ENCODE measurements at regions of chr2 and their contacts with region 1.

Region 1: DNA sequence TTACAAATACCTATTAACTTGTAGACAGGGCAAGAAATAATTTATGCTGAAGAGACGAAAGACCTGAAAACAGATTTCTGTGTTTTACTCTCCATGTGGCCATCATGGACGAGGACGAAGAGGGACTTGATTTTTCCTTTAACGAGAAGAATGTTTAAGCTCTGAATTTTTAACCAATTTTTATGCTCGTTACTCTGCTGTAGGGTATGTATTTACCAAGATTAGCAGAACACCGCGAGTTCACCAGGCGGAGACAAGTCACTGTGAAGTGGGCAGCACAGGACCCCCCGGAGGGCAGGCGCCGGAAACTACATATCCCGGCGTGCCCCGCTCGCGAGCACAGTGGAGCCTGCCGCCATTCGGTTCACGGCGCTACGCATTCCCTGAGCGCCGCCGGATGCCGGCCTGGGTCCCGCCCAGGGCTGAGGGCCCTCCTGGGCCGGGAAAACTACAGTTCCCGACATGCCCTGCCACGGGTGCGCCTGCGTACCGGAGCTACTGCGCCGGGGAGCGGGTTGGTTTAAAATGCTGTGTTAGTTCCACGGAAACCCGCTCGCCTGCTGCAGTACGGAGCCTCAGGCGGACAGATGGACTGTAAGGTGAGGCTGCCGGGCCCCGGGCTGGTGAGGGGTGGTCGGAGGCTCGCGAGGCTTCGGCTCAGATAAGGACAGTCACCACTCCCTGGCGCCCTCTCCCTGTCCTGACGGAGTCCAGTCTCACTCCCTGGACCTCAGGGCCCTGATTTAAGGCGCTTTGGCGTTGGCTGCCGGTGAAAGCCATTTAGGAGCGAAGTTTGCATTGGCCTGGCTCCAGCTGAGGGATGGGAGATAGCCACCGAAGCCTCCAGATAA is at the start of gene CCDC150:
- DNase-seq: peak; percentile 97
- H3K4me3 Mint-ChIP-seq: peak within 1 kb of the TSS; percentile 92
- H3K27ac Mint-ChIP-seq: peak within 1 kb of the TSS; percentile 48
- H3K4me1 Mint-ChIP-seq: peaks cover 11% of the 10 kb centered on the region
- H3K27me3 Mint-ChIP-seq: peaks cover 1% of the 10 kb centered on the region
- total RNA-seq, gene CCDC150: 10.1 to 10.8 TPM

Region 2: DNA sequence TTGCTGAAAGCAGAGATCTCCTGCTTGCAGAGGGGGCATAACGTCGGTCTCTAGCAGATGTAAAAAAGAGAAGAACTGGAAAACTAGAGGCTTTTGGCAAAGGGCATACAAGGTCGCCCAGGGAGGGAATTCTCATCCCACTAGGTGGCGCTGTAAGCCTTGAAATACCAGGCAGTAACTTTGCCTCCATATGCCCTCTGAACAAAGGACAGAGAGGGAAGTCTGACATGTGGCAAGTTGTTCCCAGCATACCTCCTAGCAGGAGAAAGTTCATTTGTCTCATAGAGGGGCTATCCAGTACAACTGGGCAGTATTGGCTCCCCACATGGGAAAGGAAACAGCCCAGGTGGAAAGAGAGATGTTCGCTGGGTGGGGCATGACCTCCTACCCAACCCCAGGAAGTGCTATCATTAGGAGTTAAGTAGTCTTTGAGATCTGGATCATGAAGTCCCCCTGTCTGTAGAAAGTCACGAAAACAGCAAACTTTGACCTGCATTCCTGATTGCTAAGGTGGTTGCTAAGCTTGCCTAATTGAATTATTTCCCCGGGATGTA is 507.9 kb before region 1 on chr2:
- CTCF ChIA-PET with region 1: no interaction called
- intact Hi-C with region 1: loop called (anchors 2 kb)
- DNase-seq: peak; percentile 70
- H3K4me3 Mint-ChIP-seq: no peak overlapping the region
- H3K27ac Mint-ChIP-seq: peak overlapping the region; percentile 70
- H3K4me1 Mint-ChIP-seq: peaks cover 12% of the 10 kb centered on the region
- H3K27me3 Mint-ChIP-seq: no peaks in the 10 kb centered on the region

Region 3: DNA sequence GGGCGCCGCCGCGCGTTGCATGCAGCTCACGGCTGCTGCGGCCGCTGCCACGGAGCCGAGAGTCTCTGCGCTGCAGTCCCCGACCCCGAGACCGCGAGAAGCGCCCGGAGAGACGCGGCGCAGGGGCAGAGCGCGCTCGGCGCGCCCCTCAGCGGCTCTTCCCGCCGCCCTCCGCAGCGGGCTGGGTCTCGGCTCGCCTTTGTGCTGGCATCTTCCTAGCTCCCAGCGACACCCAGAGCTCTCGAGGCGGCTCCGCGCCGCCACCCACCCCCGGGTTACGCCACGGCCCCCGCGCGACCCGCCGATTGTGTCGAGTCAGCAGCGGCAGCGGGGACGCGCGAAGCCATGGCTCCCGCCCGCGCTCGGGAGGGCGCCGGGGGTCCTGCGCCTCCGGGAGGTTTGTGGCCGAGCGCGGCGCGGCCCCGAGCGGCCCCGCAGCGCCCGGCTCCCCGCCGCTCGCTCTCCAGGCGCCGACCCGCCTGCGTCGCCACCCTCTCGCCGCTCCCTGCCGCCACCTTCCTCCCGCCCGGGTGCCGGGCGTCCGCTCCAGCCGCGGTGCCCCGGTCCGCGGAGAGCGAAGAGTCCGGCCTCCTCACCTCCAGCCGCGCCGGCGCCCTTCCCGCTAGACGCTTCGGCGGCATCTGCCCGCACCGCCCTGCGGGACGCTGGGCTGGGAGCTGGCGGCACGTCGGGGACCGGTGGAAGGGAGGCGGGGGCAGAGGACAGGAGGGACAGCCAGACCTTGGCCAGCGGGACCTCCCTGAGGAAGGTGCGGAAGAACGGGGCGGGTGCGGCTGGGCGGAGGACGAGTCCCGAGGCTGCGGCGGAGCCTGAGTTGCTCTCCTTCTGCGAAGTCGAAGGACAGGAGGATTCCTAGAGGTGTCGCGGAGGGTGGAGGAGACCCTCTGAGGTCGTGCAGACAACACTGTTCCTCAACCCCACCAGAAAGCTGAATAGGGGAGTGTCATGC is 46.2 kb before region 1 on chr2:
- CTCF ChIA-PET with region 1: no interaction called
- intact Hi-C with region 1: loop called (anchors 2 kb)
- DNase-seq: peak; percentile 25
- H3K4me3 Mint-ChIP-seq: peak within 1 kb of the TSS; percentile 67
- H3K27ac Mint-ChIP-seq: no peak within 1 kb of the TSS
- H3K4me1 Mint-ChIP-seq: peaks cover 7% of the 10 kb centered on the region
- H3K27me3 Mint-ChIP-seq: peaks cover 56% of the 10 kb centered on the region

Region 4: GRCh38 chr2:196971574-196972279 is 332.3 kb after region 1 on chr2:
- CTCF ChIA-PET with region 1: no interaction called
- intact Hi-C with region 1: no loop called
- DNase-seq: peak; percentile 18
- H3K4me3 Mint-ChIP-seq: no peak overlapping the region
- H3K27ac Mint-ChIP-seq: no peak overlapping the region
- H3K4me1 Mint-ChIP-seq: no peaks in the 10 kb centered on the region
- H3K27me3 Mint-ChIP-seq: no peaks in the 10 kb centered on the region

Region 5: GRCh38 chr2:196987649-196988364 is 348.4 kb after region 1 on chr2:
- CTCF ChIA-PET with region 1: no interaction called
- intact Hi-C with region 1: loop called (anchors 1 kb)
- DNase-seq: peak; percentile 76
- H3K4me3 Mint-ChIP-seq: peak overlapping the region; percentile 17
- H3K27ac Mint-ChIP-seq: peak overlapping the region; percentile 98
- H3K4me1 Mint-ChIP-seq: peaks cover 78% of the 10 kb centered on the region
- H3K27me3 Mint-ChIP-seq: no peaks in the 10 kb centered on the region

Region 6: GRCh38 chr2:197434541-197435513 is 795.4 kb after region 1 on chr2 and contains the start of gene SF3B1:
- CTCF ChIA-PET with region 1: no interaction called
- intact Hi-C with region 1: loop called (anchors 2 kb)
- DNase-seq: peak; percentile 100
- H3K4me3 Mint-ChIP-seq: peak within 1 kb of the TSS; percentile 99
- H3K27ac Mint-ChIP-seq: peak within 1 kb of the TSS; percentile 100
- H3K4me1 Mint-ChIP-seq: peaks cover 46% of the 10 kb centered on the region
- H3K27me3 Mint-ChIP-seq: no peaks in the 10 kb centered on the region
- total RNA-seq, gene SF3B1: 235 to 248 TPM